ENCODE measurements at regions of chr3 and their contacts with region 1.

Region 1: GRCh38 chr3:139940622-139941021 is 5.6 kb downstream of the CLSTN2 start:
- DNase-seq: peak in 2 of 5 donors; percentile 39 to 52
- ATAC-seq: peak; percentile 70 to 90 (median 81)
- H3K4me3 ChIP-seq: no peak overlapping the region
- H3K27ac ChIP-seq: no peak overlapping the region
- H3K4me1 ChIP-seq: peaks cover 0 to 29% (median 7%) of the 10 kb centered on the region in 12 donors
- H3K27me3 ChIP-seq: peaks cover 0 to 28% (median 4%) of the 10 kb centered on the region in 9 donors
- CTCF ChIP-seq: no peak
- POLR2A ChIP-seq: no peak

Region 2: DNA sequence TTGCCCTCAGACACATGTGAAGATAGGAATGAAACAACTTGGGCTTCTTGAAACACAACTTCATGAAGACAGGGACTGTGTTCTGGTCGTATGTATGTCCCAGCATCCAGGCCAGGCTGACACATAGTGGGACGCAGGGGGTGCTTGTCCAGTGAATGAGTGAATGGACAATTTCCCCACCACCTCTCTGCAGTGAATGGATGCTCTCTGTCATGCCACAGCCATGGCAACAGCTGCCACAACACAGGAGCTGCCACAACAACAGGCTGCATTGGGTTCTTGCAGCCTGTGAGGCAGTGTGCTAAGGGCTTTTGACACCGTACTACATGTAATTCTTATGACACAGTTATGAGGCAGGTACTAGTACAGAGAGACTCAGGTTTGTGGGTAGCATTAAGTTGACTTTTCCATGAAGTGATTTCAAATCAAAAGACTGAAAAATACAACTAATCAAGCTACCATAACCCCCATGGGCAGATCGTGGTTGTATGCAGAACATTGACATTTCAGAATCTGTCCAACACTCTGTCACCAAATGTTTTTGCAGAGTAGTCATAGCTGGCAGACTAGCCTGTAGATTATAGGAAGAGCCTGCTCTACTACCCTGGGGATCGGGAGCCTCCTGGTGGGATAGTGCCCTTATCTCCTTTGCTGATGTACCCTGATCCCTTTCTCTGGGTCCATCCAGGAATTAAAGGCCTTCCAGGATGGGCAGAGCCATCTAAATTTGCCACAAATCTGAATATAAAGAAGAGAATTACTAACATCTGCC is 35.2 kb after region 1 on chr3:
- intact Hi-C with region 1: loop called in 3 of 10 experiments (anchors 2 to 5 kb)
- DNase-seq: peak in 4 of 5 donors; percentile 23 to 67 (median 46)
- ATAC-seq: peak; percentile 83 to 94 (median 94)
- H3K4me3 ChIP-seq: no peak overlapping the region
- H3K27ac ChIP-seq: peak overlapping the region in 6 of 12 donors; percentile 7 to 58 (median 36)
- H3K4me1 ChIP-seq: peaks cover 0 to 21% (median 6%) of the 10 kb centered on the region in 12 donors
- H3K27me3 ChIP-seq: no peaks in the 10 kb centered on the region
- CTCF ChIP-seq: peak in 2 of 12 donors; percentile 12 to 24
- POLR2A ChIP-seq: no peak

Region 3: GRCh38 chr3:140004271-140004670 is 63.6 kb after region 1 on chr3:
- intact Hi-C with region 1: no loop called
- DNase-seq: no peak
- ATAC-seq: no peak
- H3K4me3 ChIP-seq: no peak overlapping the region
- H3K27ac ChIP-seq: no peak overlapping the region
- H3K4me1 ChIP-seq: peaks cover 0 to 7% (median 0%) of the 10 kb centered on the region in 12 donors
- H3K27me3 ChIP-seq: no peaks in the 10 kb centered on the region
- CTCF ChIP-seq: no peak
- POLR2A ChIP-seq: no peak

Region 4: GRCh38 chr3:140051019-140051957 is 110.7 kb after region 1 on chr3:
- intact Hi-C with region 1: loop called in 7 of 10 experiments (anchors 2 to 5 kb)
- DNase-seq: peak in 2 of 5 donors; percentile 19 to 24
- ATAC-seq: peak; percentile 34 to 68 (median 58)
- H3K4me3 ChIP-seq: no peak overlapping the region
- H3K27ac ChIP-seq: no peak overlapping the region
- H3K4me1 ChIP-seq: peaks cover 0 to 7% (median 0%) of the 10 kb centered on the region in 12 donors
- H3K27me3 ChIP-seq: no peaks in the 10 kb centered on the region
- CTCF ChIP-seq: peak; percentile 9 to 61 (median 50)
- POLR2A ChIP-seq: no peak

Region 5: DNA sequence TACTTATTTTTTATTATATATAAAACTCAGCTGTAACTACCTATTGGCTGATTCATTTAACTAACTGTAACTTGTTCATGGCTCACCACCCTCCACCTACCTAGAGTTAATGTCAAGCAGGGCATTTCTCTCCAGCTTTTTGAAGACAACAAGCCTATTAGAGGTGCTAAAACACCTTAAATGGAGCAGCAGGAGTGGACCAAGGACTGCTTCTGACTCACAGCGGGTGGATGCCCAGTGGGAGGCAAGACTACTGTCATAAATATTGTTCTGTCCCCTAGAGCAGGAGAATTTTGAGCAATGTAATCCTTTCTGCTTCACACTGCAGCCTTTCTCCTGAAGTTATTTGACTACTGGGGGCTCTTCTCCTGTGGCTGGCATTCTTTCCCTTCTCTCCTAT is 141.3 kb after region 1 on chr3:
- intact Hi-C with region 1: no loop called
- DNase-seq: no peak
- ATAC-seq: no peak
- H3K4me3 ChIP-seq: no peak overlapping the region
- H3K27ac ChIP-seq: no peak overlapping the region
- H3K4me1 ChIP-seq: no peaks in the 10 kb centered on the region
- H3K27me3 ChIP-seq: peaks cover 0 to 3% (median 0%) of the 10 kb centered on the region in 9 donors
- CTCF ChIP-seq: no peak
- POLR2A ChIP-seq: no peak

Region 6: GRCh38 chr3:140216249-140216648 is 275.6 kb after region 1 on chr3:
- intact Hi-C with region 1: loop called in 1 of 10 experiments (anchors 10 kb)
- DNase-seq: no peak
- ATAC-seq: peak in 1 of 4 donors; percentile 46
- H3K4me3 ChIP-seq: no peak overlapping the region
- H3K27ac ChIP-seq: no peak overlapping the region
- H3K4me1 ChIP-seq: no peaks in the 10 kb centered on the region
- H3K27me3 ChIP-seq: no peaks in the 10 kb centered on the region
- CTCF ChIP-seq: peak in 11 of 12 donors; percentile 9 to 50 (median 39)
- POLR2A ChIP-seq: no peak

Measured in heart left ventricle (tissue), 16 donors.